CD8-positive, alpha-beta memory T cell (primary cell): ENCODE measurements at regions of chr6 and their contacts with region 1.

Region 1: DNA sequence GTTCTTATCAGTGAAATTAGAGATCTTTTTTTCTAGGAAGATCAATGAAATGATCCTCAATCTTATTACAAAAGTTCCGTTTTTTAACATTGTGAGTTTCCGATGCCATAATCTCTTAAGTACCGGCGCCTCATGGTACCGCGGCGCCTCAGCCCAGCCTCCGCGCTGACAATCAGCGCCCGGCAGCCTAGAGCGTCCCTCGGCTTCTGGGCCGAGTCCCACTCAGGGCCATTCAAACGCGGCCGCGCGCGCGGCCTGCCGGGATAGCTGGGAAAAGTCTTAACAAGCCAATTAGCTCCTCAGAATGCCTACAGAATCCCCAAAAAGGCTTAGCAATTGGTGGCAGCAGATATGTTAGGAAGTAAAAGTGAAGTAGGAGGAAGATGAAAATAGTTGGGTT is 204.8 kb downstream of the ADGB start:
- DNase-seq: no peak
- H3K4me3 ChIP-seq: no peak overlapping the region
- H3K4me3 Mint-ChIP-seq: no peak overlapping the region
- H3K27ac ChIP-seq: no peak overlapping the region
- H3K27ac Mint-ChIP-seq: no peak overlapping the region
- H3K4me1 ChIP-seq: no peaks in the 10 kb centered on the region
- H3K4me1 Mint-ChIP-seq: no peaks in the 10 kb centered on the region
- H3K27me3 ChIP-seq: no peaks in the 10 kb centered on the region
- H3K27me3 Mint-ChIP-seq: peaks cover 0 to 2% of the 10 kb centered on the region in 2 donors

Region 2: GRCh38 chr6:146679386-146679785 is 124.2 kb before region 1 on chr6:
- CTCF ChIA-PET with region 1: no interaction called
- POLR2A ChIA-PET with region 1: no interaction called
- DNase-seq: no peak
- H3K4me3 ChIP-seq: no peak overlapping the region
- H3K4me3 Mint-ChIP-seq: no peak overlapping the region
- H3K27ac ChIP-seq: no peak overlapping the region
- H3K27ac Mint-ChIP-seq: no peak overlapping the region
- H3K4me1 ChIP-seq: no peaks in the 10 kb centered on the region
- H3K4me1 Mint-ChIP-seq: no peaks in the 10 kb centered on the region
- H3K27me3 ChIP-seq: no peaks in the 10 kb centered on the region
- H3K27me3 Mint-ChIP-seq: no peaks in the 10 kb centered on the region

Region 3: DNA sequence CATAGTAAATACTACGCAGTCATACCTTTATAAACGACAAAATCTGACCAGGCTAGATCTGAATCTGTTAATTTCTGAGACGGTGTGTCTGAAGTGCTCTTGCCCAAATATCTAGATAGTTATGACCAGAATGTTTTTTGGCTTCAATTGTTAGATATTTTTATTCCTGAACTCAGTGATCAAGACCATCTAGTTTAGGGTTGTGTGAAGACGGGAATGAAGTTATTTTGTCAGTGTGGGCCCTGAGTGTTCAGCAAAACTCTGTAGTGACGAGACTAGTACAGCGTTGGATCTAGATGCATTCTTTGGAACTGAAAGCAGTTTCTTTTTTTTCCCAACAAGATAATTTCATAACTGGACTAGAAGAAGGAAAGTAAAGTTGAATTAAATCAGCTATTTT is 403.8 kb after region 1 on chr6:
- CTCF ChIA-PET with region 1: no interaction called
- POLR2A ChIA-PET with region 1: interaction called, 15 read pairs
- DNase-seq: no peak
- H3K4me3 ChIP-seq: no peak overlapping the region
- H3K4me3 Mint-ChIP-seq: peak overlapping the region in 2 of 7 donors; percentile 2 to 7
- H3K27ac ChIP-seq: peak overlapping the region; percentile 67
- H3K27ac Mint-ChIP-seq: peak overlapping the region in 6 of 8 donors; percentile 5 to 83 (median 52)
- H3K4me1 ChIP-seq: peaks cover 9% of the 10 kb centered on the region
- H3K4me1 Mint-ChIP-seq: peaks cover 46 to 66% (median 59%) of the 10 kb centered on the region in 3 donors
- H3K27me3 ChIP-seq: no peaks in the 10 kb centered on the region
- H3K27me3 Mint-ChIP-seq: peaks cover 0 to 4% of the 10 kb centered on the region in 2 donors